ENCODE measurements at regions of chr9 and their contacts with region 1.

Region 1: DNA sequence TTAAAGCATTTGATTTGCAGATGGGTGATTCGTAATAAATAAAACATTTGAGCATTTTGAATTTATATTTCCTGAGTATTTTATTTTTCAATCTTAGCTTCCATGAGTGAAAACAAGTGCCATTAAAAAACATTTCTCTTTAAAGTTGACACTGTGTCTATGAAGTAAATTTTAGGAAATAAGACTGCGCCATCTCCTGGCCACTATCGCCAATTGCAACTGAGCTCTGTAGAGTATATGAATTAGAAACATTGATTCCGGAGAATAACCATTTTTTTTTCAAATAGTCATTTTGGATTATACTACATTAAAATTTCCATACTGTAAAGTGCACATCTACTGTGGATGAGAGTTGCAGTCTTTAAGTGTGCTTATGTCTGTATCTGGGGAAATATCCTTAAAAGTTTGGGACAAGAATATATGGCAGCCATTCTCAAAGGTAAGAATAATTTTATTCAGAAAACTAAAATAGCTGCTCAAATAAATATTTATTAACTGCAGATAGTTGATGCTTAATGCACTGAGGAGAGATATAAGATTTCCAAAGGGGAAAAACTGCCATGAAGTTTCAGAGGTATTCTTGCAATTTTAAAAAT is 5.9 kb downstream of the DMRTA1 start:
- H3K4me3 Mint-ChIP-seq: no peak overlapping the region
- H3K27ac Mint-ChIP-seq: no peak overlapping the region
- H3K4me1 Mint-ChIP-seq: no peaks in the 10 kb centered on the region
- H3K27me3 Mint-ChIP-seq: peaks cover 23% of the 10 kb centered on the region

Region 2: DNA sequence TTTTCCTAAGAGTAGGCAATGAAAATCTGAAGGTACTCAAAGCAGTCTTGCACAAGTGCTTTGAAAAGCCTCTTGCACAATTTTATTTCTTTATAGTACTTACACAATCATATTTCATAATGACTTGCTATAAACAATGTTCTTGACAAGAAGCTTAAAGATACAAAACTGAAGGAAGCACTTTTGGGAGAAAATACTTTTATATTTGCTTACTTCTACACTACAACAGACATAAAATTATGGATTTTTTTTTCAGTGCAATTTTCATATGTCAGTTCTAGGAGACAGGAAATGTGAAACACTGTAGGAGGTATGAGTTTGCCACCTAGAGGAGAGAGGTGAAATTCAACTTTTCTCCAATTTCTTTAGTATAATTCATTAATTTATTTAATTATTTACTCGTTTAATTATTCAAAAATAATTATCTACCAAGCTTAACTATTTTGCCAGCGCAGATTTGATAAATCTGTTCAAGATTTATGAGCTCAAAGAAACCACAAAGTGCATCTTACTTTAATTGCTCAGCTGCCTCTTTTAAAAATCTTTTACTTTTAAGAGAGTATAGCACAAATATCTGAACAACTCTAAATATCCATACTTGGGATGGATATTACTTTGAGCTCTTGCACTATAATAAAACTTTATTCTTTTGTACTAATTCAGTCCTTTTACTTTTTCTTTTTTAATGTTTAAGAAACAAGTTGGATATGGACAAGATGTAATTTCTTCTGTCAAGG is 414.4 kb before region 1 on chr9:
- intact Hi-C with region 1: loop called (anchors 10 kb)
- H3K4me3 Mint-ChIP-seq: no peak overlapping the region
- H3K27ac Mint-ChIP-seq: no peak overlapping the region
- H3K4me1 Mint-ChIP-seq: peaks cover 6% of the 10 kb centered on the region
- H3K27me3 Mint-ChIP-seq: peaks cover 6% of the 10 kb centered on the region

Region 3: DNA sequence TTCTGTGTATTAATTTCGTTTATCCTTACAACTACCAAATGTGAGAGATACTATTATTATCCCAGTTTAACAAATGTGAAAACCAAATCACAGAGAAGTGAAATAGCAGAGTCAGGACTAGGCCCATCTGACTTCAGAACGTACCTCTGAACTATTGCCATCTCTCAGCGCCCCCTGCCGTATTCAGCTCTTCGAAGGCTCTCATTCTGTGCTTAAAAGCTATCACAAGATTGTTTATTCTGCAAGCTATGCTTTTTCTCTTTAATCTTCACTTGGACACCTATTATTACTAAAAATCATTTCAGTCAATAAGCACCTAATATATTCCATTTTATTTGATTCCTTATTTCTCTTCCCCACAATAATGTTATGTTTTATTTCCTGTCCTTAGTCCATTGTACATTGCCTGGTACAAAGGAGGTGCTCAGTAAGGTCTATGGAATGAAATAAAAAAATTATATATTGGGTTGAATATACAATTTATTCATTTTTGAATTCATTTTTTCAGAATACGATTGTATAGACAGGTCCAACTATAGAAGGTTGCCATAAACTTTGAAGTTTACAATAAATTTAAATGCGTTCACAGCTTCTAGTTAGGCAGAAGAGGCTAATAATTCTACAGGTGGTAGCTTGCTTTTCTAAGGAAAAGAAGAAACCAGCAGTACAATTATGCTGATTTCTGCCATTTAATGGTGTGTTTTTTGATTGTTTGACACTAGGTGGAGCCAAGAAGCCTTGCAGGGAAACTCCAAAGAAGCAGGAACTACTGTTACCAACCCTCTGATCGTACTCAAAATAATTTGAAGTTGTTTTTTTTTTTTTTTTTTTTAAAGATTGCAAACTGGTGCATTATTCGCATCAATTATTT is 208.1 kb before region 1 on chr9:
- intact Hi-C with region 1: loop called (anchors 1 kb)
- H3K4me3 Mint-ChIP-seq: no peak overlapping the region
- H3K27ac Mint-ChIP-seq: no peak overlapping the region
- H3K4me1 Mint-ChIP-seq: peaks cover 23% of the 10 kb centered on the region
- H3K27me3 Mint-ChIP-seq: peaks cover 25% of the 10 kb centered on the region

Measured in dendritic cell treated with granulocyte-macrophage colony-stimulating factor and Interleukin-4, amounts not matched to agents 40 ng/mL and 50 ng/mL, for 4 days (primary cell).